Body of pancreas (tissue), 4 donors: ENCODE measurements at regions of chr6 and their contacts with region 1.

Region 1: DNA sequence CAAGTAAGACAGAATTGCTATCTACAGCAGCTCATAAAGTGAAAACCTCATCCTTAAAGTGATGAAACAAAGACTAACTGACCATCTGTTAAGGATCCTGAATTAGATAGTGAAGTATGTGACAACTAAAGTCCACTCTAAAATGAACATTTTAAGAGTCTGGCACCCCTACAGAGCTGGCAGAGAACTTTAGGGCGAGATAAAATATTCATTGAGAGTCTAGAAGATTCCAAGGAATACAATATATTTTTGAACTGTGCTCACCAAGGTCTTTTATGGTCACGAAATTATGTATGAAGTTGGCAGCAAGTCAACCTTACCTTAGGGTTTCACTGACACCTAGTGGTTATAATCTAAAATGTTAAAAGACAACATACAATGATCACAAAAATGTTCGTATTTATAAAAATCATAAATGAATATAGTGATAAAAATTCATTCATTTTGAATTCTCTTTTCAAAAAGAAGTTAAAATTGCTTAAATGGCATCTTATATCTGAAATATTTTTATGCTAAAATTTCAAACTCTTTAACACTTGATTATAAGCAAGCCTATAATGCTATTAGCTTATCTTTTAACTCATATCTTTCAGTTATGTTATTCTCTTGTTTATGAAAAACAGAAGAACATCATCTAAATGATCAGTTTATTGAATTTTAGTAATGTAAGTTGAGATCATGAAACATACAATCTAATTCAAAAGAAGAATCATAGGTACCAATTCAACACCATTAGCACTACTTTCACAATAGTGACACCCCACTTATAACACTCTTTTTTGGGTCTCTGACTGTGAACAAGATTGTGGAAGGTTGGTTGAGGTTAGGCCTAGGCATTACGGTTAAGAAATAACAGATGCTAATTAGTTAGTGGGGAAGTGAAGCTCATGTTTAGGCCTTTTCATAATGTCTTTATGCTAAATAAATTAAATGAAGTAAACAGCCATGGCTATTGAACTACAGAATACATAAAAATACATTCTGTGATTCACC is 27.5 kb downstream of the RSPH3 start:
- DNase-seq: no peak
- ATAC-seq: peak; percentile 75
- H3K4me3 ChIP-seq: no peak overlapping the region
- H3K27ac ChIP-seq: no peak overlapping the region
- H3K4me1 ChIP-seq: peaks cover 3% of the 10 kb centered on the region
- H3K27me3 ChIP-seq: no peaks in the 10 kb centered on the region
- CTCF ChIP-seq: peak in 6 of 7 experiments; percentile 33 to 78 (median 68)
- POLR2A ChIP-seq: no peak

Region 2: DNA sequence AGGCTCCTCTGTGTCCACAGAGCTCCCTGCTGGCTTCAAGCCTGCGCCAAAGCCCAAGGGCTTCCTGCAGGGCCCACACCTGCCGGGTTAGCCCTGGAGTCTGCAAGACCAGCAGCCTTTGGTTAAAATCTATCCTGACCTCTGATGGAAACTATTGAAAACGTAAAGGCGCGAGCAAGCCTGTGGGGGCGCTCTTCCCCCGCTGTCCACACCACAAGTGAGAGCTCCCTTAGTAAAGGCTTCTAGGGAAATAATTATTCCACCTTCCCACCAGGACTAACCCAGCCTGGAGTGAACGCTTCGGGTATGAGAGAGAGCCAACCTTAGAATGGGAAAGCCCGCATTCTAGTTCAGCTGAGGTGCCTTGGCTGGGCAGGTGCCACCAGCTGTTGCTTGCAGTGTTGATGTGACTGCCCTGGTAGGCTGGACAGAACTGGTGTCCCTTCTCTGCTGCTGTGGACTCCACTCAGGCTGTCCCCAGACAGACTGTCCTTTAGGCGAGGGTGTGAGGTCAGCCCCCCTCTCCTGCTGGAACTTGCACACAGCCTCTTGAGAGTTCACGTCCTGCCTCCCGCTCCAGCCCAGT is 254.0 kb before region 1 on chr6:
- intact Hi-C with region 1: loop called (anchors 5 kb)
- DNase-seq: peak; percentile 65 to 75 (median 68)
- ATAC-seq: peak; percentile 89
- H3K4me3 ChIP-seq: no peak overlapping the region
- H3K27ac ChIP-seq: no peak overlapping the region
- H3K4me1 ChIP-seq: peaks cover 8% of the 10 kb centered on the region
- H3K27me3 ChIP-seq: no peaks in the 10 kb centered on the region
- CTCF ChIP-seq: peak; percentile 68 to 86 (median 81)
- POLR2A ChIP-seq: no peak

Region 3: DNA sequence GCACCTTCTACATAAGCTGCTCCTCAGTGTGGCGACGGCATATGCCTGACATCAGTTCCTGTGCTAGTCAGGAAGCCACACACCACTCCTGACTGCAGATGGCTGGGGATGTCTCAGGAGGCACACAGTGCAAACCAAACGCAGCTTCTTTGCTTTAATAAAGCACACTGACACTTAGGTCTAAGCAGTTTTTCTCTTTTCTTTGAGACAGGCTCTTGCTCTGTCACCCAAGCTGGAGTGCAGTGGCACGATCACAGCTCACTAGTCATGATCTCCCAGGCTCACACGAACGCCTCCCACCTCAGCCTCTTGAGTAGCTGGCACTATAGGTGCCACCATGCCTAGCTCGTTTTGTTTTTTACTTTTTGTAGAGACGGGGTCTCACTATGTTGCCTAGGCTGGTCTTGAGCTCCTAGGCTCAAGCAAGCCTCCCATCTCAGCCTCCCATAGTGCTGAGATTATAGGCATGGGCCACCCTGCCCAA is 183.1 kb before region 1 on chr6:
- intact Hi-C with region 1: loop called (anchors 10 kb)
- DNase-seq: peak in 1 of 4 donors; percentile 8
- ATAC-seq: no peak
- H3K4me3 ChIP-seq: no peak overlapping the region
- H3K27ac ChIP-seq: no peak overlapping the region
- H3K4me1 ChIP-seq: peaks cover 35% of the 10 kb centered on the region
- H3K27me3 ChIP-seq: no peaks in the 10 kb centered on the region
- CTCF ChIP-seq: no peak
- POLR2A ChIP-seq: no peak